PC-3 (cell line): ENCODE measurements at regions of chr2 and their contacts with region 1.

Region 1: DNA sequence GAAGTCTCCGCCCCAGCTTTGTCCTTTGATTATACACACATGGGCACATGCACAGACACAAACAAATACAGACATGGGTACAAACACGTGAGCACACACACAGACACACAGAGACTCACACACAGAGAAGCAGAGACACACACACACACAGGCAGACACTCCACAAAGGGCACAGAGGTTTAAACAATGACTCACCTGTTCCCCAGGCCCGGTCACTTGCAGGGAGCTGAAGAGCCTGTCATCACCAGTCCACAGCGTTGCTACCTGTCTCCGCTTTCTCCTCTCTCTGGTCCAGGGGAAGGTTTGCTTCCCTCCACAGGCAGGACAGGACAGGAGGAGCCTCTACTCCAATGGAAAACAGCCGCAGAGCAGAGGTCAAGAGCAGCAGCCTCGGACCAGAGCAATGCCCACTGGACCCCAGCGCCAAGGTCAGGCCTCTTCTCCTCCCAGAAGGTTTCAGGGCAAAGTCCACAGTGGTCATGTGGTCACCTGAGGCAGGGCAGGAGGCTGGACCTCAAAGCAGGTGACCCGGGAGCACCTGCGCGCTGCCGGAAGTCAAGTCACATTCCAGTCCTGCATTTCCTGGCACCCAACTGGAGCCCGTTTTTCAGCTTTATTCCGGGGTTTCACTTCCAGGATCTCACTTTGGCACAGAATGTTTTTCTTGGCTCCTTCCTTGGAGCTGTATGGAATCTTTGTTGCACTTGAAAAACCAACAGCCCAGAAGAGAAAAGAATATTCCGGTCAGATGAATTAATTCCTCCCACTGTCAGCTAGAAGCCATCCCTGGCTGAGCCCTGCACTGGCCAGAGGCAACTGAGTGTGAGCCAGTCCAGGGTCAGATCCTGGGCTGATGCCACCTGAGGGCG is at the start of gene RAB17:
- DNase-seq: peak; percentile 65
- ATAC-seq: peak; percentile 80
- H3K4me3 ChIP-seq: peak within 1 kb of the TSS; percentile 71
- H3K27ac ChIP-seq: peak within 1 kb of the TSS; percentile 87
- H3K4me1 ChIP-seq: peaks cover 14% of the 10 kb centered on the region
- H3K27me3 ChIP-seq: no peaks in the 10 kb centered on the region
- CTCF ChIP-seq: no peak
- total RNA-seq, gene RAB17: 28.9 and 52.2 TPM in 2 replicates

Region 2: DNA sequence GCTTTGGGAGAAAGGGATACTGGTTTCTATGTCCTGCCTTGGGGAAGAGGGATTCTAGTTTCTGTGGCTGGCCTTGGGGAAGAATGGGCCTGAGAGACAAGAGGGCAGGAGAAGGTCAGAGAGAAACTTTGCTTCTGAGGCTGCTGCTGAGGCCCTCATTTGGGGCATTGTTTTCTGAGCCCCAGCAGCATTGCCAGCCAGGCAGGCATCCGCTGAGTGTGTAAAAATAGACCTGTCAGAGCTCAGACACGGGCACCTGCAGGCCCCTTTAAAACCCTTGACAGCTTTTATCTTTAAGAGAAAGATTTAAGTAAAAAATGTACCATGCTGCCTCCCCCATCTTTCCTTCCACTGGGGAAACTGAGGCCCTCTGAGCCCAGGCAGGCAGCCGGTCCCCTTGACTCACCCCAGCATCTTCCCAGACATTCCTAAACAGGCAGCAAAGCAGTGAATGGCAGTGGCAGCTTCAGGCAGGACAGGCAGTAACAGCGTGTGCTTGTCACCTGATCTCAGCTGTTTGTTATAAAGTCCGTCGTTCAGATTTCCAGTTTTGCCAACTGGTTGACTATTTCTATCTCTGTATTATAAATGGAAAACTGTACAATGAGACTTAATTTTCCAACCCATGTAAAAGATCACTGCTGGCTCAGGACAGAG is 75.9 kb before region 1 on chr2:
- CTCF ChIA-PET with region 1: no interaction called
- POLR2A ChIA-PET with region 1: no interaction called
- intact Hi-C with region 1: no loop called
- DNase-seq: no peak
- ATAC-seq: no peak
- H3K4me3 ChIP-seq: no peak overlapping the region
- H3K27ac ChIP-seq: no peak overlapping the region
- H3K4me1 ChIP-seq: no peaks in the 10 kb centered on the region
- H3K27me3 ChIP-seq: no peaks in the 10 kb centered on the region
- CTCF ChIP-seq: no peak

Region 3: GRCh38 chr2:237662671-237663093 is 72.2 kb after region 1 on chr2:
- CTCF ChIA-PET with region 1: no interaction called
- POLR2A ChIA-PET with region 1: no interaction called
- intact Hi-C with region 1: loop called (anchors 10 kb)
- DNase-seq: peak; percentile 74
- ATAC-seq: peak; percentile 90
- H3K4me3 ChIP-seq: no peak overlapping the region
- H3K27ac ChIP-seq: no peak overlapping the region
- H3K4me1 ChIP-seq: peaks cover 8% of the 10 kb centered on the region
- H3K27me3 ChIP-seq: no peaks in the 10 kb centered on the region
- CTCF ChIP-seq: no peak

Region 4: GRCh38 chr2:237708065-237708398 is 117.5 kb after region 1 on chr2:
- CTCF ChIA-PET with region 1: no interaction called
- POLR2A ChIA-PET with region 1: interaction called, 10 read pairs
- intact Hi-C with region 1: no loop called
- DNase-seq: no peak
- ATAC-seq: no peak
- H3K4me3 ChIP-seq: no peak overlapping the region
- H3K27ac ChIP-seq: no peak overlapping the region
- H3K4me1 ChIP-seq: peaks cover 19% of the 10 kb centered on the region
- H3K27me3 ChIP-seq: no peaks in the 10 kb centered on the region
- CTCF ChIP-seq: no peak

Region 5: GRCh38 chr2:238069021-238069709 is 478.7 kb after region 1 on chr2:
- CTCF ChIA-PET with region 1: no interaction called
- POLR2A ChIA-PET with region 1: no interaction called
- intact Hi-C with region 1: no loop called
- DNase-seq: no peak
- ATAC-seq: no peak
- H3K4me3 ChIP-seq: no peak overlapping the region
- H3K27ac ChIP-seq: no peak overlapping the region
- H3K4me1 ChIP-seq: no peaks in the 10 kb centered on the region
- H3K27me3 ChIP-seq: no peaks in the 10 kb centered on the region
- CTCF ChIP-seq: no peak